A549 (cell line): ENCODE measurements at regions of chr12 and their contacts with region 1.

Region 1: DNA sequence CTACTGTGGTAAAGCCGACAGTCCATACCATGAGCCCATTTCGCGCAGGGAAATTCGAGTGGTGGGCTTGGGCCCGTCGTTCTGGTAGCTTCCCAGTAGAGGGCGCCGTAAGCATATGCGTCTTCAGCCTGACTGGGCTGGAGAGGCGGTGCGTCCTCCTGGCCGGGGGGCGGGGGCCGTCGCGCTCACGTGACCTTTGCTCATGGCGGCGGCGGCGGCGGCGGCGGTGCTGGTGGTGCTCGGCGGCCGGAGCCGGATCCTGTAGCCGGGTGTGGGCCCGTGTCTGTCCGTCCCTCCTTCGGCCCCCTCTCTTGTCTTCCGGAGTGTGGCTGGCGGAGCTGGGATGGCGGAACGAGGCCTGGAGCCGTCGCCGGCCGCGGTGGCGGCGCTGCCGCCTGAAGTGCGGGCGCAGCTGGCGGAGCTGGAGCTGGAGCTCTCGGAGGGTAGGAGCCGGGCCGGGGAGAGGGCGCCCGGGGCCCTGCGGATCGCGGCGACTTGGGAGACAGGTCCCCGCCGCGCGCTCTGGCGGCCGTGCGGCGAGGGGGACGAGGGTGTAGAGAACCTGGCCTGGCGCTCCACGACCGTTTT is at the start of gene DIP2B:
- DNase-seq: peak; percentile 73 to 95
- ATAC-seq: peak; percentile 91 to 93
- H3K4me3 ChIP-seq: peak within 1 kb of the TSS; percentile 62
- H3K27ac ChIP-seq: peak within 1 kb of the TSS; percentile 88 to 94
- H3K4me1 ChIP-seq: peaks cover 40% of the 10 kb centered on the region
- CTCF ChIP-seq: peak; percentile 93
- EP300 ChIP-seq: no peak
- POLR2A ChIP-seq: peak; percentile 66
- RAD21 ChIP-seq: peak; percentile 98 to 99
- polyA plus RNA-seq, gene DIP2B: 29.3 and 32.8 TPM in 2 replicates

Region 2: GRCh38 chr12:50488801-50489200 is 16.1 kb before region 1 on chr12:
- CTCF ChIA-PET with region 1: interaction called, 10 read pairs
- POLR2A ChIA-PET with region 1: no interaction called
- DNase-seq: no peak
- ATAC-seq: peak; percentile 30 to 36; a peak in 5 of 6 replicates
- H3K4me3 ChIP-seq: no peak overlapping the region
- H3K27ac ChIP-seq: no peak overlapping the region
- H3K4me1 ChIP-seq: no peaks in the 10 kb centered on the region
- CTCF ChIP-seq: no peak
- EP300 ChIP-seq: no peak
- POLR2A ChIP-seq: no peak
- RAD21 ChIP-seq: no peak

Region 3: DNA sequence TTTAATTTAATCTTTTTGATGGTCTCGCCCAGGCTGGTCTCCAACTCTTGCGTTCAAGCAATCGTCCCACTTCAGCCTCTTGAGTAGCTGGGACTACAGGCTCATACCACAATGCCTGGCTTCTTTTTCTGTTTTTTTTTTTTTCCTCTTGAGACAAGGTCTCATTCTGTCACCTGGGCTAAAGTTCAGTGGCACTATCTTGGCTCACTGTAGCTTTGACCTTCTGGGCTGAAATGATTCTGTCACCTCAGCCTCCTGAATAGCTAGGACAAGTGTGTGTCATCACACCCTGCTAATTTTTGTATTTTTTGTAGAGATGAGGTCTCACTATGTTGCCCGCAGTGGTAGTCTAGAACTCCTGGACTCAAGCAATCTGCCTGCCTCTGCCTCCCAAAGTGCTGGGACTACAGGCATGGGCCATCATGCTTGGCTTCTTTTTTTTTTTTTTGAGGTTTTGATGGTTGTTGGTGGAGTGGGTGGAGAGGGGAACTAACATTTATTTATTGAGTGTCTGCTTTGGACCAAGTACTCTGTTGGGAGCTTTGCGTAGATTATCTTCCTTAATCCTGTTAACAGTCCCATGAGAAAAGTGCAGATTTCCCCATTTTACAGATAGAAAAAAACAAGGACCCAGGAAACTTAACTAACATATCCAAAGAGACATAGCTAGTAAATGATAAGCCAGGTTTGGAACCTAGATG is 101.9 kb after region 1 on chr12:
- CTCF ChIA-PET with region 1: interaction called, 17 read pairs
- POLR2A ChIA-PET with region 1: no interaction called
- DNase-seq: no peak
- ATAC-seq: no peak
- H3K4me3 ChIP-seq: no peak overlapping the region
- H3K27ac ChIP-seq: no peak overlapping the region
- H3K4me1 ChIP-seq: no peaks in the 10 kb centered on the region
- CTCF ChIP-seq: no peak
- EP300 ChIP-seq: no peak
- POLR2A ChIP-seq: no peak
- RAD21 ChIP-seq: no peak

Region 4: GRCh38 chr12:50659690-50660424 is 155.0 kb after region 1 on chr12:
- CTCF ChIA-PET with region 1: interaction called, 16 read pairs
- POLR2A ChIA-PET with region 1: no interaction called
- DNase-seq: no peak
- ATAC-seq: peak in 1 of 2 experiments; percentile 63; a peak in 2 of 6 replicates
- H3K4me3 ChIP-seq: no peak overlapping the region
- H3K27ac ChIP-seq: peak overlapping the region; percentile 29 to 37; a peak in 3 of 6 replicates
- H3K4me1 ChIP-seq: peaks cover 33% of the 10 kb centered on the region
- CTCF ChIP-seq: no peak
- EP300 ChIP-seq: no peak
- POLR2A ChIP-seq: no peak
- RAD21 ChIP-seq: no peak

Region 5: GRCh38 chr12:50695961-50696360 is 191.1 kb after region 1 on chr12:
- CTCF ChIA-PET with region 1: interaction called, 17 read pairs
- POLR2A ChIA-PET with region 1: no interaction called
- DNase-seq: no peak
- ATAC-seq: no peak
- H3K4me3 ChIP-seq: no peak overlapping the region
- H3K27ac ChIP-seq: no peak overlapping the region
- H3K4me1 ChIP-seq: no peaks in the 10 kb centered on the region
- CTCF ChIP-seq: no peak
- EP300 ChIP-seq: no peak
- POLR2A ChIP-seq: no peak
- RAD21 ChIP-seq: no peak

Region 6: GRCh38 chr12:50740307-50740706 is 235.4 kb after region 1 on chr12:
- CTCF ChIA-PET with region 1: interaction called, 24 read pairs
- POLR2A ChIA-PET with region 1: no interaction called
- DNase-seq: no peak
- ATAC-seq: no peak
- H3K4me3 ChIP-seq: no peak overlapping the region
- H3K27ac ChIP-seq: no peak overlapping the region
- H3K4me1 ChIP-seq: no peaks in the 10 kb centered on the region
- CTCF ChIP-seq: no peak
- EP300 ChIP-seq: no peak
- POLR2A ChIP-seq: no peak
- RAD21 ChIP-seq: no peak